Endothelial cell of umbilical vein (primary cell): ENCODE measurements at regions of chr7 and their contacts with region 1.

Region 1: GRCh38 chr7:15686295-15686956 is at the start of gene MEOX2:
- DNase-seq: peak; percentile 87
- H3K4me3 ChIP-seq: peak within 1 kb of the TSS; percentile 61 to 95 (median 80)
- H3K27ac ChIP-seq: peak within 1 kb of the TSS; percentile 70
- H3K4me1 ChIP-seq: peaks cover 22% of the 10 kb centered on the region
- H3K27me3 ChIP-seq: no peaks in the 10 kb centered on the region
- CTCF ChIP-seq: no peak
- POLR2A ChIP-seq: peak; percentile 69
- total RNA-seq, gene MEOX2: 45.1 and 47.8 TPM in 2 replicates

Region 2: GRCh38 chr7:15305002-15305600 is 381.3 kb before region 1 on chr7:
- CTCF ChIA-PET with region 1: no interaction called
- POLR2A ChIA-PET with region 1: no interaction called
- dilution Hi-C with region 1: no loop called
- intact Hi-C with region 1: loop called (anchors 2 kb)
- DNase-seq: peak; percentile 65
- H3K4me3 ChIP-seq: no peak overlapping the region
- H3K27ac ChIP-seq: no peak overlapping the region
- H3K4me1 ChIP-seq: no peaks in the 10 kb centered on the region
- H3K27me3 ChIP-seq: no peaks in the 10 kb centered on the region
- CTCF ChIP-seq: peak; percentile 61 to 66
- POLR2A ChIP-seq: no peak

Region 3: DNA sequence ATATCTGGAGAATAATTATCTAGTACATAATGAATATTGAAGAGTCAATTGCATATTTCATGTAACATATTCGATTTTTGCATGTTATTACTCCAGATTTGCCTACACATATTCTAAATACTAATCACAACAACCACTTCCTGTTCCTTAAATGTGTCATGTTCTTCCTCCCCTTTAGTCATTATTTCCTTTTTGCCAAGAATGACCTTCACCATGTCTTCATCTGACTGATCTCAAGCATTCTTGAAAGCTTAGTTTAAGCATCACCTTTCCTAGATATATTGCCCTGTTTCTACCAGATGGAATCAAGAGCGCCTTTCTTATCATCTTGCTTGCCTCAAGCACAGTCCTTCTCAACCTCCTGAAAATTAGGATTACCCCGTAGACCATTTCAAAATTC is 23.6 kb after region 1 on chr7:
- CTCF ChIA-PET with region 1: interaction called, 5 read pairs
- POLR2A ChIA-PET with region 1: interaction called, 5 read pairs
- dilution Hi-C with region 1: no loop called
- intact Hi-C with region 1: loop called (anchors 1 kb)
- DNase-seq: peak; percentile 60
- H3K4me3 ChIP-seq: no peak overlapping the region
- H3K27ac ChIP-seq: peak overlapping the region; percentile 57
- H3K4me1 ChIP-seq: peaks cover 40% of the 10 kb centered on the region
- H3K27me3 ChIP-seq: no peaks in the 10 kb centered on the region
- CTCF ChIP-seq: no peak
- POLR2A ChIP-seq: no peak

Region 4: GRCh38 chr7:15839416-15840100 is 153.1 kb after region 1 on chr7:
- CTCF ChIA-PET with region 1: no interaction called
- POLR2A ChIA-PET with region 1: no interaction called
- dilution Hi-C with region 1: no loop called
- intact Hi-C with region 1: loop called (anchors 5 kb)
- DNase-seq: peak; percentile 78
- H3K4me3 ChIP-seq: peak overlapping the region in 2 of 3 experiments; percentile 2 to 37
- H3K27ac ChIP-seq: peak overlapping the region; percentile 42
- H3K4me1 ChIP-seq: peaks cover 14% of the 10 kb centered on the region
- H3K27me3 ChIP-seq: no peaks in the 10 kb centered on the region
- CTCF ChIP-seq: no peak
- POLR2A ChIP-seq: no peak

Region 5: GRCh38 chr7:16040346-16040745 is 353.9 kb after region 1 on chr7:
- CTCF ChIA-PET with region 1: no interaction called
- POLR2A ChIA-PET with region 1: no interaction called
- dilution Hi-C with region 1: no loop called
- intact Hi-C with region 1: no loop called
- DNase-seq: no peak
- H3K4me3 ChIP-seq: no peak overlapping the region
- H3K27ac ChIP-seq: no peak overlapping the region
- H3K4me1 ChIP-seq: no peaks in the 10 kb centered on the region
- H3K27me3 ChIP-seq: no peaks in the 10 kb centered on the region
- CTCF ChIP-seq: no peak
- POLR2A ChIP-seq: no peak

Region 6: DNA sequence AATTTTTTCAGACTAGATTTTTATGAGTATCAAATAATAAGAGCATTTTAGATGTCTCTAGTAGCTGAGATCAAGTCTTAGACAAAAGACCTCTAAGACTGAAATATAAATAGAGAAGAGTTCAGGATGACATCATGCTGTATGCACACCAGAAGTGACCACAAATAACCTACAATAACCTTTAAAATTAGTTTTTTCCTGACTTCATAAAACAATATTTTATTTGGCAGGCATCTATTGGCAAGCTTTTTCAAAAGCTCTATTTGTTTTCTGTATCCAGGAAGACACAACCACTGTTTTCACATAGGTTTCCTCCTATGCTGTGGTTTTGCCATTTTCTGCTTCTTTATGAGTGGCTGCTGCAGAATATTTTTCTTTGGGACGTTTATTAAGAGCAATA is 375.8 kb after region 1 on chr7:
- CTCF ChIA-PET with region 1: interaction called, 4 read pairs
- POLR2A ChIA-PET with region 1: no interaction called
- dilution Hi-C with region 1: no loop called
- intact Hi-C with region 1: loop called (anchors 1 kb)
- DNase-seq: peak; percentile 95
- H3K4me3 ChIP-seq: no peak overlapping the region
- H3K27ac ChIP-seq: peak overlapping the region; percentile 88
- H3K4me1 ChIP-seq: peaks cover 34% of the 10 kb centered on the region
- H3K27me3 ChIP-seq: no peaks in the 10 kb centered on the region
- CTCF ChIP-seq: no peak
- POLR2A ChIP-seq: no peak

Region 7: GRCh38 chr7:16645593-16646471 is 959.4 kb after region 1 on chr7 and contains the starts of genes ANKMY2 and BZW2:
- CTCF ChIA-PET with region 1: no interaction called
- POLR2A ChIA-PET with region 1: no interaction called
- dilution Hi-C with region 1: no loop called
- intact Hi-C with region 1: loop called (anchors 5 kb)
- DNase-seq: peak; percentile 97
- H3K4me3 ChIP-seq: peak within 1 kb of the TSS; percentile 74 to 98 (median 98)
- H3K27ac ChIP-seq: peak within 1 kb of the TSS; percentile 91
- H3K4me1 ChIP-seq: peaks cover 46% of the 10 kb centered on the region
- H3K27me3 ChIP-seq: no peaks in the 10 kb centered on the region
- CTCF ChIP-seq: no peak
- POLR2A ChIP-seq: peak; percentile 96
- total RNA-seq, gene ANKMY2: 9.8 and 11.6 TPM in 2 replicates
- total RNA-seq, gene BZW2: 95.3 and 106 TPM in 2 replicates